ENCODE measurements at regions of chr1 and their contacts with region 1.

Region 1: DNA sequence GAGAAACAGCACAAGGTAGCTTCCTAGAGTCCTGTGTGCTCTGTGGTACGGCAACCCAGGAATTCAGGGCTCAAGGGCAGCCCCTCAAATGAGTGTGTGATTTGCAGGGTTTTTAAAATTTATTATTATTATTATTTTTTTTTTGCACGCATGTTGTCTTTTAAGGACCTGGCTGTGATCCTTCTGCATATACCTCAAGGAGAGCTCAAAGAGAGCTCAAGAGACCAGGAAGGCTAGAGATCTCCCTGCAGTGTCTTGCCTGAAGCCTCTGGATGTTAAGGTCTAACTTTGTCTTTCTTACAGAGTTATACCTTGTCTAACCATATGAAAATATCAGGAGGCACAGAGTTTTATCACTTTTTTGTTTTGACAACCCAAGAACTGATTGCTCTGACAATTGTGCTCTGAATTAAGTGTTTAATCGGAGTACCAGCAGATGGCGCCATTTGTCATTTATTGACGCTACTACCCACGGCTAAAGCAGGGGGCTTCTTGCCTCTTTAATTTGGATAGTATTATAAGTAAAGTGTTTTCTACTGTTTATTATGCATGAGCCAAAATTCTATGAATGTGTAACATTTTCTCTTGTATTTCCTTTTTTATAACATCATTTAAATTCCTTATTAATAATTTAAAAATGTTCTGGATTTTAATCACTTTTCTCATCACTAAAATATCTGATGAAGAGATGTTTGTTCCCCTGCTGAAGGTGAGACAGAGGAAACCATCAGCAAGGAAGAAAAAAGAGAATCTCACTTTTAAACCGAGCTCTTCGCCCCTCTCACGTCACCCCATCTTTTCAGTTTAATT is 35.8 kb upstream of the LMO4 start:
- DNase-seq: peak; percentile 59
- H3K4me3 Mint-ChIP-seq: no peak overlapping the region
- H3K27ac Mint-ChIP-seq: no peak overlapping the region
- H3K4me1 Mint-ChIP-seq: no peaks in the 10 kb centered on the region
- H3K27me3 Mint-ChIP-seq: peaks cover 9% of the 10 kb centered on the region

Region 2: GRCh38 chr1:87131809-87132283 is 161.0 kb before region 1 on chr1:
- CTCF ChIA-PET with region 1: interaction called, 3 read pairs
- POLR2A ChIA-PET with region 1: no interaction called
- intact Hi-C with region 1: loop called (anchors 5 kb)
- DNase-seq: peak; percentile 79
- H3K4me3 Mint-ChIP-seq: peak overlapping the region; percentile 70
- H3K27ac Mint-ChIP-seq: no peak overlapping the region
- H3K4me1 Mint-ChIP-seq: peaks cover 10% of the 10 kb centered on the region
- H3K27me3 Mint-ChIP-seq: peaks cover 32% of the 10 kb centered on the region

Region 3: DNA sequence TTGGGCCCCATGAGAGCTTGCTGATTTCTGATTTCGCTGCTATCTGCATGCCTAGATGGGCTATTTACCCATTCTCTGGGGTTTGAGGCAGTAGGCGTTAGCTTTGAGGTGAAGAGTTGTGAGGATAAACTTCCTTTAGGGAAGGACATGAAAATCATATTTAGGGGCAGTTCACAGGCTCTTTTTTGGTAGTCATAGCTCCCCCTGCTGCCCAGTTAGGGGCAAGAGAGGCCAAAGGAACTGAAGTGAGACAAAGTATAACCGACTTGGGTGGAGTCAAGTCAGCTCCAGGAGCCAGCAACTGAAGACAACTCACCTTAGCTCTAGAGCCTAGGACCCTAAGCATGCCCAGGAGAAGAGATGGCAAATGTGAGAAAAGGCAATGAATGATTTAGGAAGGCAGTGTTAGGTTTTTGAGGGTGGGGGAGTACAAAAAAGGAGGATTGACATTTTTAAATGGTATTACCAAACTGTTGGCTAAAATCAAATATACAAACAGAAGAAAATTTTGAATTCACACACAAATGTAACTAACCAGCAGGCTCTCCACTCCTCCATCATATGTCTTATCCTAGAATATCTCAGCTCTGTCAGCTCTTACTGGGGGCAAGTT is 660.9 kb after region 1 on chr1:
- CTCF ChIA-PET with region 1: interaction called, 56 read pairs
- POLR2A ChIA-PET with region 1: no interaction called
- intact Hi-C with region 1: loop called (anchors 1 kb)
- DNase-seq: peak; percentile 62
- H3K4me3 Mint-ChIP-seq: no peak overlapping the region
- H3K27ac Mint-ChIP-seq: no peak overlapping the region
- H3K4me1 Mint-ChIP-seq: no peaks in the 10 kb centered on the region
- H3K27me3 Mint-ChIP-seq: peaks cover 19% of the 10 kb centered on the region

Region 4: GRCh38 chr1:88052167-88052566 is 759.3 kb after region 1 on chr1:
- CTCF ChIA-PET with region 1: no interaction called
- POLR2A ChIA-PET with region 1: no interaction called
- intact Hi-C with region 1: loop called (anchors 10 kb)
- DNase-seq: no peak
- H3K4me3 Mint-ChIP-seq: no peak overlapping the region
- H3K27ac Mint-ChIP-seq: no peak overlapping the region
- H3K4me1 Mint-ChIP-seq: no peaks in the 10 kb centered on the region
- H3K27me3 Mint-ChIP-seq: peaks cover 4% of the 10 kb centered on the region